PC-9 (cell line): ENCODE measurements at regions of chr4 and their contacts with region 1.

Region 1: GRCh38 chr4:177511311-177512001 is 69.2 kb upstream of the AGA start:
- DNase-seq: peak; percentile 56 to 84
- H3K4me3 ChIP-seq: no peak overlapping the region
- H3K27ac ChIP-seq: no peak overlapping the region
- H3K4me1 ChIP-seq: peaks cover 33% of the 10 kb centered on the region
- H3K27me3 ChIP-seq: no peaks in the 10 kb centered on the region
- CTCF ChIP-seq: no peak

Region 2: GRCh38 chr4:177441803-177442622 is 69.4 kb before region 1 on chr4 and contains the start of gene AGA:
- CTCF ChIA-PET with region 1: no interaction called
- POLR2A ChIA-PET with region 1: interaction called, 3 read pairs
- intact Hi-C with region 1: loop called (anchors 1 kb)
- DNase-seq: peak; percentile 71 to 92
- H3K4me3 ChIP-seq: peak within 1 kb of the TSS; percentile 91
- H3K27ac ChIP-seq: peak within 1 kb of the TSS; percentile 92
- H3K4me1 ChIP-seq: peaks cover 16% of the 10 kb centered on the region
- H3K27me3 ChIP-seq: no peaks in the 10 kb centered on the region
- CTCF ChIP-seq: no peak
- total RNA-seq, gene AGA: 13.8 and 17.0 TPM in 2 replicates